PC-9 (cell line): ENCODE measurements at regions of chr3 and their contacts with region 1.

Region 1: DNA sequence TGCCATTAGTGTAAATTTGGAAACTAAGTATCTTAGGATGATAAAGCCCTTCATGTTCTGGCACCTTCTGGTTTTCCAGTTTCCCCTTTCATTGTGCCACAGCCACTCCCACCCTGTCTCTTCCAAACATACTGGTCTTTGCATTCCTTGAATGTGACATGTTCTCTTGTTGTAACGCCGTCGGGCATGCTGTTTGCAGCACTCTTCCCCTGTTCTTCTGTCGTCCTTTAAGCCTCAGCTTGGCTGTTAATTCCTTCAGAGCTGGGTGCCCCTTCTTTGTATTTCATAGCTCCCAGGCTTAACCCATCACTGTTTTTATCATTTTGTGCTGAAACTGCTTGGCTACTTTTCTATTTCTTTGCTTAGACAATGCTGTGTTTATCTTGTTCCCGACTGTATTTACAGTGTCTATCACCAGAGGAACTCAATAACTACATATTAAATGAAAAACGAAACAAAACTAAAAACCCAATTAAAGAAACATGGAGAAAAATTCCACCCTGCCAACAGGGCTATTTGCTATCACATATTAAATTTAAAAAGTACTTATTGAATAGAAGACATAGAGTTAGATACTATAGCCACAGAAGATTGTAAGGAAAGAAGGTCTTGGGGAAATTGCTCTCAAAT is 95.4 kb upstream of the KCNAB1 start:
- DNase-seq: peak in 1 of 2 experiments; percentile 10
- H3K4me3 ChIP-seq: no peak overlapping the region
- H3K27ac ChIP-seq: no peak overlapping the region
- H3K4me1 ChIP-seq: no peaks in the 10 kb centered on the region
- H3K27me3 ChIP-seq: no peaks in the 10 kb centered on the region
- CTCF ChIP-seq: no peak

Region 2: DNA sequence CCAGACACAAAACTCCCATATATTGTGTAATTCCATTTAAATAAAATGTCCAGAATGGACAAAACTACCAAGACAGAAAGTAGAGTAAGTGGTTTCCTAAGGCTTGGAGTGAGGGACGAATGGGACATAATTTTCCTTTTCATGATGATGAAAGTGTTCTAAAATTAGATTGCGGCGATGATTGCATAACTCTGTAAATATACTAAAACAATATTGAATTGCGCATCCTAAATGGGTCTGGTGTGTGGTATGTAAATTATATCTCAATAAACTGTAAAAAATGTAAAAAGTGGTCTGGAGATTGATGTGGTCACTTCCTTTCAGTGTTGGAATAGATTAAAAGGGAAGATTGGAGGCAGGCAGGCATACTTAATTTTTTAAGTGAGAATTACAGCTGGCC is 10.5 kb before region 1 on chr3:
- CTCF ChIA-PET with region 1: no interaction called
- POLR2A ChIA-PET with region 1: no interaction called
- intact Hi-C with region 1: no loop called
- DNase-seq: no peak
- H3K4me3 ChIP-seq: no peak overlapping the region
- H3K27ac ChIP-seq: no peak overlapping the region
- H3K4me1 ChIP-seq: no peaks in the 10 kb centered on the region
- H3K27me3 ChIP-seq: no peaks in the 10 kb centered on the region
- CTCF ChIP-seq: no peak

Region 3: DNA sequence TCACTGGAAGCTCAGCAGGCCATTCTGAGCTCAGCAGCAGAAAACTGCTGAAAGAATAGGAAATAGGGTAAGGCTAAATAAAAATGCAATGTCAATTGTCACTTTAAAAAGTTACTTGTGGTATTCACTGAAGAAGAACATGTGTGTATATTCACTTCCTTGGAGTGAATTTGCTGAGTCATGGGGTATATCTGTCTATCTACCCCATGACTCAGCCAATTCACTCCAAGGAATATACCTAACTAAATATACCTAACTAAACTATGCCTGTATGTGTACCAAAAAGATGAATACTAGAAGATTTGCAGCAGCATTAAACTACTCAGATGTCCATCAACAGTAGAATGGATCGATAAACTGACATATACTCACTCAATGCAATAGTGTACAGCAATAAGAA is 25.9 kb after region 1 on chr3:
- CTCF ChIA-PET with region 1: no interaction called
- POLR2A ChIA-PET with region 1: interaction called, 18 read pairs
- intact Hi-C with region 1: no loop called
- DNase-seq: no peak
- H3K4me3 ChIP-seq: no peak overlapping the region
- H3K27ac ChIP-seq: no peak overlapping the region
- H3K4me1 ChIP-seq: 0 out of 2 replicates have a peak, but pooled peaks cover 10% of the 10 kb centered on the region
- H3K27me3 ChIP-seq: no peaks in the 10 kb centered on the region
- CTCF ChIP-seq: no peak

Region 4: GRCh38 chr3:156341831-156342416 is 316.9 kb after region 1 on chr3:
- CTCF ChIA-PET with region 1: no interaction called
- POLR2A ChIA-PET with region 1: no interaction called
- intact Hi-C with region 1: loop called (anchors 10 kb)
- DNase-seq: no peak
- H3K4me3 ChIP-seq: no peak overlapping the region
- H3K27ac ChIP-seq: no peak overlapping the region
- H3K4me1 ChIP-seq: no peaks in the 10 kb centered on the region
- H3K27me3 ChIP-seq: no peaks in the 10 kb centered on the region
- CTCF ChIP-seq: no peak